Activated B cell treated with CpG ODN at 0.5 μM for 24 hours (primary cell): ENCODE measurements at regions of chr1 and their contacts with region 1.

Region 1: GRCh38 chr1:225845571-225846259 is 35.8 kb downstream of the EPHX1 start:
- DNase-seq: no peak
- ATAC-seq: no peak
- H3K4me3 Mint-ChIP-seq: no peak overlapping the region
- H3K27ac Mint-ChIP-seq: peak overlapping the region; percentile 56
- H3K4me1 Mint-ChIP-seq: peaks cover 47% of the 10 kb centered on the region
- H3K27me3 Mint-ChIP-seq: no peaks in the 10 kb centered on the region
- CTCF ChIP-seq: no peak

Region 2: GRCh38 chr1:225480825-225481434 is 364.8 kb before region 1 on chr1:
- CTCF ChIA-PET with region 1: no interaction called
- POLR2A ChIA-PET with region 1: no interaction called
- intact Hi-C with region 1: loop called (anchors 2 kb)
- DNase-seq: peak; percentile 55
- ATAC-seq: peak; percentile 90
- H3K4me3 Mint-ChIP-seq: peak overlapping the region; percentile 30
- H3K27ac Mint-ChIP-seq: peak overlapping the region; percentile 56
- H3K4me1 Mint-ChIP-seq: peaks cover 57% of the 10 kb centered on the region
- H3K27me3 Mint-ChIP-seq: no peaks in the 10 kb centered on the region
- CTCF ChIP-seq: peak; percentile 16

Region 3: GRCh38 chr1:225554216-225554812 is 291.4 kb before region 1 on chr1:
- CTCF ChIA-PET with region 1: no interaction called
- POLR2A ChIA-PET with region 1: no interaction called
- intact Hi-C with region 1: loop called (anchors 5 kb)
- DNase-seq: no peak
- ATAC-seq: no peak
- H3K4me3 Mint-ChIP-seq: no peak overlapping the region
- H3K27ac Mint-ChIP-seq: no peak overlapping the region
- H3K4me1 Mint-ChIP-seq: no peaks in the 10 kb centered on the region
- H3K27me3 Mint-ChIP-seq: peaks cover 4% of the 10 kb centered on the region
- CTCF ChIP-seq: no peak

Region 4: GRCh38 chr1:225652729-225653462 is 192.8 kb before region 1 on chr1 and contains the start of gene ENAH:
- CTCF ChIA-PET with region 1: interaction called, 3 read pairs
- POLR2A ChIA-PET with region 1: no interaction called
- intact Hi-C with region 1: loop called (anchors 2 kb)
- DNase-seq: peak; percentile 49
- ATAC-seq: peak; percentile 69
- H3K4me3 Mint-ChIP-seq: peak within 1 kb of the TSS; percentile 92
- H3K27ac Mint-ChIP-seq: peak within 1 kb of the TSS; percentile 24
- H3K4me1 Mint-ChIP-seq: peaks cover 13% of the 10 kb centered on the region
- H3K27me3 Mint-ChIP-seq: peaks cover 9% of the 10 kb centered on the region
- CTCF ChIP-seq: no peak
- total RNA-seq, gene ENAH: 1.2 and 1.4 TPM in 2 replicates

Region 5: DNA sequence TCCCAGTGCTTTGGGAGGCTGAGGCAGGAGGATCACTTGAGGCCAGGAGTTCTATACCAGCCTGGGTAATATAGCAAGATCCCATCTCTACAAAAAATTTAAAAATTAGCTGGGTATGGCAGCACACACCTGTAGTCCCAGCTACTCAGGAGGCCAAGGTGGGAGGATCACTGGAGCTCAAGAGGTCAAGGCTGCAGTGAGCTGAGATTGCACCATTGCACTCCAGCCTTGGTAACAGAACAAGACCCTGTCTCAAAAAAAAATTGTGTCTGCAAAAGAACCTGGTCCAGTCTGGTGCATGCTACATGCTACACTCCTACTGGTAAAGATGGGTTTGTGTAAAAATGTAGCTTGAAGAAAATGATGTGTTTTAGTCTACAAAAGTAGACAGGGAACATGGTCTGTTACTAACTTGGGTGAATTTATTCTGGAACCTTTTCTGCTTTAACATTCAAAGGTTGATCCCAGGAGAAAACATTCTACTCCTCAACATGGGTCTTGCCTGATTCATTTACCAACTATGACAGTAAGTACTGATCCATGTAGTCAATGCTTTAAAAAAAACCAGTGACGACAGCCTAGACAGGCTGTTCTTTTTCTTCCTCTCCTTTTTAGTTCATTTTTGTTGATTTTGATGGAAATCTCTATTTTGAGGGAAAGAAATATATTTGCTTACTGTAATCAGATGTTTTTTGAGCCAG is 160.1 kb before region 1 on chr1:
- CTCF ChIA-PET with region 1: no interaction called
- POLR2A ChIA-PET with region 1: no interaction called
- intact Hi-C with region 1: no loop called
- DNase-seq: no peak
- ATAC-seq: no peak
- H3K4me3 Mint-ChIP-seq: no peak overlapping the region
- H3K27ac Mint-ChIP-seq: no peak overlapping the region
- H3K4me1 Mint-ChIP-seq: peaks cover 15% of the 10 kb centered on the region
- H3K27me3 Mint-ChIP-seq: peaks cover 2% of the 10 kb centered on the region
- CTCF ChIP-seq: no peak

Region 6: DNA sequence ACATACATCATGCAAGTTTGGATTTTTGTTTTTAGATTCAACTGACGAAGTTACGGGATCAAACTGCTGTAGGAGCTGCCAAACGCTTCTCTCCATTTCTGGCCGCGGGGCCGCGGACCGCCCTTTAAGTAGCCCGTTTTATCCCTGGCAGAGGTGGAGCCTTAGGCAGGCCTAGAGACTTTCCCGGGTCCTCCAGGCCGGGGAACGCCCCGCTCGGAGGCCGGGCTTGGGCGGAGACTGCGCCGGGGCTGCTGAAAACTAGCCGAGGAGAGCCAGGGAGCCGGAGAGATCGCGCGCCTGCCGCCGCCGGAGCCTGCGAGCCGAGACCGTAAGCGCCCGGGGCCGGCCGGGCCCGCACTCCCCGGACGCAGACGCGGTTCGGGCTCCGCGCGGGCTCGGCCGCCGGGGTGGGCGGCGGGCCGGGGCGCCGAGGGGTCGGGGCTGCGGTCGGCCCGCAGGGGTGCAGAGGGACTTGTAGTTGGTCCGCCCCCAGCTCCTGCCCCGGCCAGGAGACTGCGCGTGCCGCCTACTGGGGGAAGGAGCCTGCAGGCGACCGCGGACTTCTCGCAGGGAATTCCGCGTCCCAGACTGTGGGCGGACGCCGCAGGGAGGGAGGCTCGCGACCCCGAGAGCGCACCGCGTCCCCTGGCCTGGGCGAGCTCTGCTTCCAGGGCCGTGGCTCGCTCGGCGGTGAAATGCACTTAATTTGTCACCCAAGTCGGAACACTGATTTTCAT is 35.7 kb before region 1 on chr1 and contains the start of gene EPHX1:
- CTCF ChIA-PET with region 1: no interaction called
- POLR2A ChIA-PET with region 1: no interaction called
- intact Hi-C with region 1: loop called (anchors 5 kb)
- DNase-seq: peak; percentile 57
- ATAC-seq: peak; percentile 87
- H3K4me3 Mint-ChIP-seq: peak within 1 kb of the TSS; percentile 86
- H3K27ac Mint-ChIP-seq: no peak within 1 kb of the TSS
- H3K4me1 Mint-ChIP-seq: peaks cover 12% of the 10 kb centered on the region
- H3K27me3 Mint-ChIP-seq: peaks cover 3% of the 10 kb centered on the region
- CTCF ChIP-seq: no peak
- total RNA-seq, gene EPHX1: 0.93 and 1.2 TPM in 2 replicates

Region 7: GRCh38 chr1:225896937-225897549 is 51.3 kb after region 1 on chr1:
- CTCF ChIA-PET with region 1: no interaction called
- POLR2A ChIA-PET with region 1: interaction called, 3 read pairs
- intact Hi-C with region 1: loop called (anchors 1 kb)
- DNase-seq: peak; percentile 34
- ATAC-seq: peak; percentile 99
- H3K4me3 Mint-ChIP-seq: peak overlapping the region; percentile 48
- H3K27ac Mint-ChIP-seq: peak overlapping the region; percentile 95
- H3K4me1 Mint-ChIP-seq: peaks cover 37% of the 10 kb centered on the region
- H3K27me3 Mint-ChIP-seq: no peaks in the 10 kb centered on the region
- CTCF ChIP-seq: no peak

Region 8: GRCh38 chr1:225911191-225912130 is 65.7 kb after region 1 on chr1:
- CTCF ChIA-PET with region 1: no interaction called
- POLR2A ChIA-PET with region 1: no interaction called
- intact Hi-C with region 1: loop called (anchors 5 kb)
- DNase-seq: peak; percentile 66
- ATAC-seq: peak; percentile 90
- H3K4me3 Mint-ChIP-seq: no peak overlapping the region
- H3K27ac Mint-ChIP-seq: no peak overlapping the region
- H3K4me1 Mint-ChIP-seq: peaks cover 23% of the 10 kb centered on the region
- H3K27me3 Mint-ChIP-seq: no peaks in the 10 kb centered on the region
- CTCF ChIP-seq: peak; percentile 40